Activated T-helper 2 cell treated with anti-CD3 and anti-CD28 coated beads, Interferon-gamma antibody, Interleukin-2, Interleukin-4, amounts not matched to agents 10 μg/mL and 5 μg/mL and 100 μg/mL, durations not matched to agents 14 hours and 24 hours and 36 hours (primary cell): ENCODE measurements at regions of chr6 and their contacts with region 1.

Region 1: DNA sequence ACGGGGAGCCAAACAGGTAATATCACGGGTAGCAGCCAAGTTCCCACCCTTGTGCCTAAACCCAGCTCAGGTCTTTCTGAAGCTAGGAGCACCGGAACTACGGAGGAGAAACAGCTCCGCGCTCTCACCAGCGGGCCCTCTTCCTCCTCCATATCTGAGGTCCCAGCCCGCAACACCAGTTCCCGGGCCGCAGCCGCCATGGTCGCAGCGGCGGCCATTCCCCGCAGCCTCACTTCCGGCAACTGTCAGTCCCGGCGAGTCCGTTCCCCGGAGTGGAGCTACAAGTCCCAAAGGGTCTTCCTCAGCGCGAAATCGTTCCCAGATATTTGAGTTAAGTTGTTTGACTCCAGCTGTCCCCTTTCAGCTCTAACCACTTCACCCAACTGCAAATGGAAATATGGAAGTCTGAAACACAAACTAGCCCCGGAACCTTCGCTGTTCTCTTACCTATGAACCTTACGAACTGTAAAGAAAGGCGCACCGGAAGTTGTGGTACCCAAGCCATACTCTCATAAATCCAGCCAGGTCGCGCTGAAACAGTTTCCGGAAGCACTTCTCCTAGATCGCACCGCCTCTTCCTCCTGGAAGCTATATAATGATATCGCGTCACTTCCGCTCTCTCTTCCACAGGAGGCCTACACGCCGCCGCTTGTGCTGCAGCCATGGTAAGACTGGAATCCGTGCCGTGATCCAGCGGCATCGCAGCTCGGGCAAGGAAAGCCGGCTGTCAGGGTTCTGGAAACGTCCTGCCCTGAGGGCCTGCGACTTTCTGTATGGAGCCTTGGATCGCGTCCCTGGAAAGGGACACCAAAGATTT is at the starts of genes RPS18 and VPS52:
- DNase-seq: peak; percentile 92
- H3K4me3 Mint-ChIP-seq: peak within 1 kb of the TSS; percentile 98
- H3K27ac Mint-ChIP-seq: peak within 1 kb of the TSS; percentile 100
- H3K4me1 Mint-ChIP-seq: peaks cover 31% of the 10 kb centered on the region
- H3K27me3 Mint-ChIP-seq: no peaks in the 10 kb centered on the region
- total RNA-seq, gene RPS18: 3,099 and 3,143 TPM in 2 replicates
- total RNA-seq, gene VPS52: 53.4 and 56.7 TPM in 2 replicates

Region 2: DNA sequence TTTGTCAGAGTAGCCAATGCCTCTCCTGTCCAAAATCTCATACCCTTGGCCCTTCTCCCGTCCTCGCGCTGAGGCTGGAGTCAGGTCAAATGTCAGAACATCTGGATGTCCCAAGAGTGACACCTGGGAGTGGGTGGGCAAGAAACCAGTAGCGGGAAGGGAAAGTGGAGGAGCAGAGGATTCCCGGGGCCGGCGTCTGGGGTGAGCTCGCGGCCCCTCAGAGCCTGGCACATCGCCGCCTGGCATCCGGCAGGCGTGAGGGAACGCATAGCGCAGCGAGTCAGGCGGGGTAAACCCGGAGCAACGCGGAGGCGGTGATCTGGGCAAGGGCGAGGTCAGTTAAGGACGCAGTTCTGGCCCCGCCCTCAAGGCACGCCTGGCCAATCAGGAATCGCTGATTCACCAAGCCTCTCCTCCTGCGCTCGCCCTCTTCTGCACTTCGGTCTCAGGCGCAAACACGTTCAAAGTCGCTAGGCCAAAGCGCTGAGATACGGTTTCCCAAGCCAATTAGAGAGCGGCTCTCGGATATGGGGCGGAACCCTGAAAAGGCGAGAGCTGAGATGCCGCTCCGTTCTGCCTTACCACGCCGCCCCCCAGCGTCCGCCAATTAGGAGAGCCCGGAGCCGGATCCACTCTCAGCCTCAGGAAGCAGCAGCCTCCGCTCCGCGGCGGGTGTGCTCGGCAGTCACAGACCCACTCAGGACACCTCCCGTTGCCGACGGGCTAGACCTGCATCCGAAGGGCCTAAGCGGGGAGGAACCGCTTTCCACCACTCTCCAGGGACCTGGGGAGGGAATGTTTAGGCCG is 22.5 kb before region 1 on chr6:
- intact Hi-C with region 1: loop called (anchors 1 kb)
- DNase-seq: peak; percentile 97
- H3K4me3 Mint-ChIP-seq: peak overlapping the region; percentile 88
- H3K27ac Mint-ChIP-seq: peak overlapping the region; percentile 92
- H3K4me1 Mint-ChIP-seq: peaks cover 32% of the 10 kb centered on the region
- H3K27me3 Mint-ChIP-seq: no peaks in the 10 kb centered on the region

Region 3: GRCh38 chr6:33288921-33289748 is 17.5 kb after region 1 on chr6 and contains the starts of genes PFDN6 and WDR46:
- intact Hi-C with region 1: loop called (anchors 1 kb)
- DNase-seq: peak; percentile 83
- H3K4me3 Mint-ChIP-seq: peak within 1 kb of the TSS; percentile 98
- H3K27ac Mint-ChIP-seq: peak within 1 kb of the TSS; percentile 88
- H3K4me1 Mint-ChIP-seq: peaks cover 25% of the 10 kb centered on the region
- H3K27me3 Mint-ChIP-seq: no peaks in the 10 kb centered on the region
- total RNA-seq, gene PFDN6: 104 and 117 TPM in 2 replicates
- total RNA-seq, gene WDR46: 87.3 and 98.3 TPM in 2 replicates

Region 4: GRCh38 chr6:33323623-33323948 is 51.9 kb after region 1 on chr6:
- intact Hi-C with region 1: loop called (anchors 1 kb)
- DNase-seq: no peak
- H3K4me3 Mint-ChIP-seq: peak overlapping the region; percentile 92
- H3K27ac Mint-ChIP-seq: peak overlapping the region; percentile 93
- H3K4me1 Mint-ChIP-seq: peaks cover 41% of the 10 kb centered on the region
- H3K27me3 Mint-ChIP-seq: no peaks in the 10 kb centered on the region

Region 5: DNA sequence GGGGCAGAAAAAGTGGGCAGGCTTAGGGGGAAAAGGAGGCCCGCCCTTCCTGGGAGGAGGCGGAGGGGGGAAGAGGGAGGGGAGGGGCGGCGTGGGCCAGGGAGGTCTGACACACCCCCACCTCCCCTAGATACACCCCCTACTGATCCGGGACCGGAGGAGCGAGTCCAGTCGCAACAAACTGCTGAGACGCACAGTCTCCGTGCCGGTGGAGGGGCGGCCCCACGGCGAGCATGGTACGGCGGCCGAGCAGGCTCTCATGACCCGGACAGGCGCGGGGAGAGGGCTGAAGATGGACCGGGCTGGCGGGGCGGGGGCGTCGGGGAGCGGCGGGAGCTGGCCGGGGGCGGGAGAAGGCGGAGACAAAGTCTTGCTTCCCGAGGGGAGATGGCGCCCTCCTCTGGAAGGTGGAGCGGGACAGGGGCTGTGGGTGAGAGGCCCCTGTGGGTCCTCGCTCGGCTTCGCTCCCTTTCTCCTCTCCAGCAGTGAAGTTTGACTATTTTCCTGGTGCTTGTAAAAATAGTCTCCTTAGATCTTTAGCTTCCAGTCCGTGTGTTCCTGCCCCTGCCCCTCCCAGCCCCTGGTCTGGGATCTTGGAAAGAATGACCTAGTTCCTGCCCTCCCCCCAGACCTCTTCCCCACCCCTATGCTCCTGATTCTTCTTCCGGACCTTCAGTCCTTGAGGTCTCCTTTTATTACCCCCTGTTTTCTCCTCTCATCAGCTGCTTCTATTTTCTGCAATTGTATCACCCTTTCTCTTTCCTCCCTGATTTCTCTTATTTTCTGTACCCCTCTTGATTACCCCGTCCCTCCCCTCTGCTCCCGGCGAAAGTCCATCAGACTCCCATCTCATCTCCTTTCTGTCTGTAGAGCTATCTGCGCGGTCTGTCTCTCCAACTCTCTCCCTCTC is 154.3 kb after region 1 on chr6:
- intact Hi-C with region 1: loop called (anchors 10 kb)
- DNase-seq: peak; percentile 73
- H3K4me3 Mint-ChIP-seq: peak overlapping the region; percentile 88
- H3K27ac Mint-ChIP-seq: peak overlapping the region; percentile 90
- H3K4me1 Mint-ChIP-seq: peaks cover 77% of the 10 kb centered on the region
- H3K27me3 Mint-ChIP-seq: no peaks in the 10 kb centered on the region